ENCODE measurements at regions of chr3 and their contacts with region 1.

Region 1: GRCh38 chr3:4394048-4394447 is 73.0 kb downstream of the SUMF1 start:
- DNase-seq: peak; percentile 84
- H3K4me3 ChIP-seq: no peak overlapping the region
- H3K27ac ChIP-seq: peak overlapping the region; percentile 81
- H3K4me1 ChIP-seq: peaks cover 46% of the 10 kb centered on the region
- H3K27me3 ChIP-seq: no peaks in the 10 kb centered on the region
- CTCF ChIP-seq: no peak
- POLR2A ChIP-seq: no peak

Region 2: GRCh38 chr3:4416961-4417360 is 22.9 kb after region 1 on chr3:
- CTCF ChIA-PET with region 1: interaction called, 3 read pairs
- POLR2A ChIA-PET with region 1: no interaction called
- dilution Hi-C with region 1: no loop called
- intact Hi-C with region 1: loop called (anchors 2 kb)
- DNase-seq: peak; percentile 54
- H3K4me3 ChIP-seq: no peak overlapping the region
- H3K27ac ChIP-seq: no peak overlapping the region
- H3K4me1 ChIP-seq: no peaks in the 10 kb centered on the region
- H3K27me3 ChIP-seq: no peaks in the 10 kb centered on the region
- CTCF ChIP-seq: no peak
- POLR2A ChIP-seq: no peak

Region 3: GRCh38 chr3:4466741-4467521 is 72.9 kb after region 1 on chr3 and contains the start of gene SUMF1:
- CTCF ChIA-PET with region 1: no interaction called
- POLR2A ChIA-PET with region 1: no interaction called
- dilution Hi-C with region 1: no loop called
- intact Hi-C with region 1: loop called (anchors 1 kb)
- DNase-seq: peak; percentile 80
- H3K4me3 ChIP-seq: peak within 1 kb of the TSS; percentile 56 to 86 (median 83)
- H3K27ac ChIP-seq: peak within 1 kb of the TSS; percentile 51
- H3K4me1 ChIP-seq: peaks cover 4% of the 10 kb centered on the region
- H3K27me3 ChIP-seq: peaks cover 0 to 3% of the 10 kb centered on the region in 2 experiments
- CTCF ChIP-seq: no peak
- POLR2A ChIP-seq: peak; percentile 85
- total RNA-seq, gene SUMF1: 26.6 and 31.5 TPM in 2 replicates

Measured in endothelial cell of umbilical vein (primary cell).